Activated naive CD4-positive, alpha-beta T cell treated with anti-CD3 and anti-CD28 coated beads for 36 hours (primary cell): ENCODE measurements at regions of chr1 and their contacts with region 1.

Region 1: DNA sequence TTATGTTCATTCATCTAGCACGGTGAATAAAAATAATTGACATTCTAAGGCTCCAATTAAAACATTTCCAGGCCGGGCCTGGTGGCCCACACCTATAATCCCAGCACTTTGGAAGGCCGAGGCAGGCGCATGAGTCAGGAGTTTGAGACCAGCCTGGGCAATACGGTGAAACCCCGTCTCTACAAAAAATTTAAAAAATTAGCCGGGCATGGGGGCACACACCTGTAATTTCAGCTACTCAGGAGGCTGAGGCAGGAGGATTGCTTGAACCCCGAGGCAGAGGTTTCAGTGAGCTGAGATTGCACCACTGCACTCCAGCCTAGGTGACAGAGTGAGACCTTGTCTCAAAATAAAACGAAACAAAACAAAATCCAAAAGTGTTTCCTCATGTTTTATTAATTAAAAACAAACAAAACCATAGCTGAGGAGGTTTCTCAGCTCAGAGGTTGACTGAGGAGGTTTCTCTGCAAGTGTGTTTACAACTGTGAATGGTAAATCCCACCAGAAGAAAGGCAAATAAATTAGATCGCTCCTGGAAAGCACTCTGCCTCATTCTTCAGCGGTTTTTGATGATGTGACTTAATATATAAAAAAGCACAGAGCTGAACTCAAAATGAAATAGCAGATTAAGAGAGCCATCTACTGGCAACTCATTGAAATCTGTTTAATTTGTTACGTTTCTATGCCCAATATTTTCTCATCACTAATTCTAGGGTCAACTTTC is 37.7 kb upstream of the ATG4C start:
- DNase-seq: no peak
- H3K4me3 Mint-ChIP-seq: no peak overlapping the region
- H3K27ac Mint-ChIP-seq: no peak overlapping the region
- H3K4me1 Mint-ChIP-seq: no peaks in the 10 kb centered on the region
- H3K27me3 Mint-ChIP-seq: peaks cover 11% of the 10 kb centered on the region

Region 2: GRCh38 chr1:62082456-62083363 is 663.5 kb before region 1 on chr1:
- CTCF ChIA-PET with region 1: no interaction called
- intact Hi-C with region 1: loop called (anchors 5 kb)
- DNase-seq: peak; percentile 62
- H3K4me3 Mint-ChIP-seq: no peak overlapping the region
- H3K27ac Mint-ChIP-seq: no peak overlapping the region
- H3K4me1 Mint-ChIP-seq: no peaks in the 10 kb centered on the region
- H3K27me3 Mint-ChIP-seq: no peaks in the 10 kb centered on the region

Region 3: GRCh38 chr1:62175568-62176179 is 570.6 kb before region 1 on chr1:
- CTCF ChIA-PET with region 1: interaction called, 11 read pairs
- intact Hi-C with region 1: loop called (anchors 1 kb)
- DNase-seq: peak; percentile 62
- H3K4me3 Mint-ChIP-seq: no peak overlapping the region
- H3K27ac Mint-ChIP-seq: no peak overlapping the region
- H3K4me1 Mint-ChIP-seq: no peaks in the 10 kb centered on the region
- H3K27me3 Mint-ChIP-seq: peaks cover 3% of the 10 kb centered on the region

Region 4: DNA sequence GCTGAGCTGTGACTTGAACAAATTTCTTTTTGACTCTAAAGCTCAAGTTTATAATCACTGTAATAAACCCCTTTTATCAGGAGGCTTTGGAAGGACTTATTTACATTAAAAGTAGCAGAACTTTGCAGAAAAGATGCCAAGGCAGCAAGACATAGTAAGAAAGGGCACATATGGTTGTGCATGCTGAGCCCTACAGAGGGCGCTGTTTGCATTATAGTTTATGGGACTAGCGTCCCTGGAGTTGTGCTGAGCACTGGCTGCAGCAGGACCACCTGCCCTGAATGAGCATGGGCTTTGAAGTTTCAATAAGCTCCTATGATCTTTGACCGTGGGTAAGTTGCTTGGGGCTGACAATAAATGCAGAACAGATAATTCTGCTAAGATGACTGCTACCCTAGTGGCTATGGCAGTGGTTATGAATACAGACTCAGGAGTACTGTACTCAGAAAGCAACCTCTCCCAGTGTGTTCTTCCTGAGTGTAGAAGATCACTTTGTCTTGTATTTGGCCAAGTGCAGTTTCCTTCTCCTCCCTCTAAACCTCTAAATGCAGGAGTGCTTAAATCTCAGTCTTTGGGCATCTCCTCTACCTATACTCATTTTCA is 354.8 kb before region 1 on chr1:
- CTCF ChIA-PET with region 1: interaction called, 3 read pairs
- intact Hi-C with region 1: loop called (anchors 1 kb)
- DNase-seq: peak; percentile 58
- H3K4me3 Mint-ChIP-seq: no peak overlapping the region
- H3K27ac Mint-ChIP-seq: no peak overlapping the region
- H3K4me1 Mint-ChIP-seq: no peaks in the 10 kb centered on the region
- H3K27me3 Mint-ChIP-seq: no peaks in the 10 kb centered on the region

Region 5: GRCh38 chr1:62407405-62408009 is 338.7 kb before region 1 on chr1:
- CTCF ChIA-PET with region 1: interaction called, 5 read pairs
- intact Hi-C with region 1: loop called (anchors 1 kb)
- DNase-seq: no peak
- H3K4me3 Mint-ChIP-seq: no peak overlapping the region
- H3K27ac Mint-ChIP-seq: no peak overlapping the region
- H3K4me1 Mint-ChIP-seq: no peaks in the 10 kb centered on the region
- H3K27me3 Mint-ChIP-seq: no peaks in the 10 kb centered on the region

Region 6: GRCh38 chr1:62508187-62508758 is 238.0 kb before region 1 on chr1:
- CTCF ChIA-PET with region 1: interaction called, 21 read pairs
- intact Hi-C with region 1: loop called (anchors 1 kb)
- DNase-seq: peak; percentile 17
- H3K4me3 Mint-ChIP-seq: no peak overlapping the region
- H3K27ac Mint-ChIP-seq: no peak overlapping the region
- H3K4me1 Mint-ChIP-seq: no peaks in the 10 kb centered on the region
- H3K27me3 Mint-ChIP-seq: no peaks in the 10 kb centered on the region

Region 7: DNA sequence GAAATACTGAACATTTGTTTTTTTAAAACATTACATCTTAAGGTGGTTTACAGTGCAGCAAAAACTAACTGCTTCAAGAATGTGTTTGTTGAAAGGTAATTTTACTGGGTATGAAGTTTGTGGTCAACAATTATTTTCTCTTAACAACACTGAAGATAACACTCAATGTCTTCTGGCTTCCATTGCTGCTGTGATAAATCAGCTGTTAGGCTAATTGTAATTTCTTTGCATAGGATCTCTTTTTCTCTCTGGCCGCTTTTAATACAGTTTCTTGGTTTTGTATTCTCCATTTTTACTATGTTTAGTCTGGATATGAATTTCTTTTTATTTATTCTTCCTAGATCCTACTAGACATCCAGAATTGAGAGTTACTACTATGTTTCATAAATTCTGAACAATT is 103.0 kb before region 1 on chr1:
- CTCF ChIA-PET with region 1: no interaction called
- intact Hi-C with region 1: no loop called
- DNase-seq: no peak
- H3K4me3 Mint-ChIP-seq: no peak overlapping the region
- H3K27ac Mint-ChIP-seq: no peak overlapping the region
- H3K4me1 Mint-ChIP-seq: no peaks in the 10 kb centered on the region
- H3K27me3 Mint-ChIP-seq: no peaks in the 10 kb centered on the region